Naive thymus-derived CD8-positive, alpha-beta T cell (primary cell): ENCODE measurements at regions of chr21 and their contacts with region 1.

Region 1: DNA sequence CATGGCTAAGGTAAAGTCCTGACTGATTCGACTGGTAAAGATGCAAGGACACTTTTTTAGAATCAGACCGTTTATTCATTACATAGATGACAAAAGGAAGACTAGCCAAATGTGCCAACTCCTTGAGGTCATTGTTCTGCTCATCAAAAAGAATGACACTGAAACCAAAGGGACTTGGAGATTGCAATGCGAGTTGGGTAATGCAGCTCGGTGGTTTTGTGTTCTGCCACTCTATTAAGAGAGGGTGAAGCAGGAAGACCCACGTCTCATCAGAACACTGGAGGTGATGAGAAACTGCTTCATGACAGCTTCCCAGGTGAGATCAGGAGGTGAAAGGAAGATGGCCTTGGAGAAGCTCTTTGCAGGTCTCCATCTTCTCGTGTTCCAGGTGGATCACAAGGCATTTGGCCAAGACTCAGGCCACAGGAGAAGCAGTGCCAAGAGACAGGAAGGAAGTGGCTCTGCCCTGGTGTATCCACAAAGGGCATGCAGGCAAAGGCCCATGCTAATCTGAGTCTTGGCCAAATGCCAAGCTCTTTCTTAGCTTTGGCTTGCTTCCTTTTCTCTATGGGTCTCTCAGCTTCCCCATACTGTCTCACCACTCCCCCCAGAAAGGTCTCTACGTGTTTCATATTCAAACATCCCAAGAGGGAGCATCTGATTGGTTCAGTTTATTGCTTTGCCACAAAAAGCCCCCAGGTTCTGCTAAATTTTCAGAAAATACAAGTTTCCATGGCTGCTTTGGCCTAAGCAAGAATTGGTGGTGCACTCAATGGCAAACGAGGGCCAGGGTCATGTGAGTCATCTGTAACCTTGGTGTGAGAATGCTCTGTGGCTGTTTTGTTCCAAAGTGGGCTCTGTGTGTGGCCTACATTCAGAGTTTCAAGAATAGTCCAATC is 5.7 kb upstream of the CCT8 start:
- DNase-seq: peak in 7 of 10 donors; percentile 35 to 67 (median 46)
- ATAC-seq: peak; percentile 22 to 47
- H3K4me3 Mint-ChIP-seq: peak overlapping the region; percentile 29 to 92 (median 68)
- H3K27ac Mint-ChIP-seq: peak overlapping the region; percentile 78 to 96 (median 94)
- H3K4me1 Mint-ChIP-seq: peaks cover 27 to 74% (median 70%) of the 10 kb centered on the region in 4 donors
- H3K27me3 Mint-ChIP-seq: no peaks in the 10 kb centered on the region

Region 2: DNA sequence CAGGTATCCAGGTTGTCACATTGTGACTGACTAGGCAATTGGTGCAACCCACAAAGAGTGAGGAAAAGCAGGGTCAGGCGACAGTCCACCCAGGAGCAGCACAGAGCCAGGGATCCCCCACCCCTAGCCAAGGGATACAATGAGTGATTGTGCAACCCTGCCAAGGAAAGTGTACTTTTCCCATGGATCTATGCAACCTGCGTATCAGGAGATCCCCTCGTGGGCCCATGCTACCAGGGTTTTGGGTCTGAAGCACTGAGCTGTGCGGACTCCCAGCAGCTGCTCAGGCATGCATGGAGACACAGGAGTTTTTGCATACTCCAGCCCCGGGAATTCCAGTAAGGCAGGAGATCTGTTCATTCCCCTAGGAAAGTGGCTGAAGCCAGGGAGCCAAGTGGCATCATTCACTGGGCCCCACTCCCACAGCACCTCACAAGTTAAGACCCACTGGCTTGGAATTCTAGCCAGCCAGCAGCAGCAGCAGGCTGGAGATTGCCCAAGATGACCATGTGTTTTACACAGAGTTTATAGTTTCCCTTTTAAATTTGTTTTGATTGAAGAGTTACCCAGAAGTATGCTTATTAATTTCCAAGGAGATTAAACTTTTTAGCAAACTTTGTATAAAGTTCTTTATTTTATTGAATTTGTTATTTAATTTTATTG is 222.4 kb before region 1 on chr21:
- POLR2A ChIA-PET with region 1: no interaction called
- DNase-seq: no peak
- ATAC-seq: no peak
- H3K4me3 Mint-ChIP-seq: no peak overlapping the region
- H3K27ac Mint-ChIP-seq: no peak overlapping the region
- H3K4me1 Mint-ChIP-seq: peaks cover 0 to 11% (median 6%) of the 10 kb centered on the region in 4 donors
- H3K27me3 Mint-ChIP-seq: no peaks in the 10 kb centered on the region

Region 3: DNA sequence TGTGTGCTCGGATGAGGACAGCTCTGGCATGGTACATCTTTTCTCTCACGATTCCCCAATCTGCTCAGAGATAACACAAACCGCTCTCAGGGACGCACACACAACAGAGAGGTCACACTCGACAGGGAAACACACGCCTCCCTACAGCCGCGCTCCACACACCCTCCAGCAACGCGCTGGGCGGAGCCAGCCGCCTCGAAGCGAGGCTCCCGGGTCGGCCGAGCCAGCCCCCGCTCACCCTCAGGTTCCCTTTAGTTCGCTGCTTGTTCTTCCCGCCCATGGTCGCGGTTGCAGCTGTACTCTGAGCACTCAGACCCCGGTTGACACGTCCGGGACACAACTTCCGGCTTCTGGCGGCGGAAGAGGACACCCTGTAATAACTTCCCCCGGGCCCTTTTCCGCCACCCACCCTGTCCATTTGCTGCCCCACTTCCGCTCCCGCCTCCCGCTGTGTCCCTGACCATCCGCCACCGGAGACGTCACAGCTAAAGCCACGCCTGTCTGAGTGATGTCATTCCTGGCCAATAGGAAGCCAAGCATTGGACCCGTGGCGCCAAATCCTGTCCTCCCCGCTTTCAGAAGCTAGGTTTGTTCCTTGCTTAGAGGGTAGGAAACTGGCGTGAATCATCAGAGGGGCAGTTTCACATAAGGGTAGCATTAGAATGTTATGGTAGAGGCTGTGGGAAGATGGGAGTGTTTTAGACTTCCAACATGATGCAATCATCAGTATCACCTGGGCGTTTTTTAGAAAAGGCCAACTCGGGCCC is 86.4 kb before region 1 on chr21 and contains the start of gene LTN1:
- POLR2A ChIA-PET with region 1: interaction called, 14 read pairs
- DNase-seq: peak; percentile 92 to 99 (median 98)
- ATAC-seq: peak; percentile 91 to 92
- H3K4me3 Mint-ChIP-seq: peak within 1 kb of the TSS; percentile 92 to 99 (median 98)
- H3K27ac Mint-ChIP-seq: peak within 1 kb of the TSS; percentile 94 to 99 (median 98)
- H3K4me1 Mint-ChIP-seq: peaks cover 14 to 46% (median 38%) of the 10 kb centered on the region in 4 donors
- H3K27me3 Mint-ChIP-seq: no peaks in the 10 kb centered on the region
- polyA plus RNA-seq, gene LTN1: 12.0 to 14.1 (median 13.0) TPM

Region 4: GRCh38 chr21:29002442-29003144 is 76.5 kb before region 1 on chr21:
- POLR2A ChIA-PET with region 1: interaction called, 31 read pairs
- DNase-seq: peak; percentile 87 to 98 (median 94)
- ATAC-seq: peak; percentile 99 to 100
- H3K4me3 Mint-ChIP-seq: peak overlapping the region; percentile 84 to 96 (median 93)
- H3K27ac Mint-ChIP-seq: peak overlapping the region; percentile 97 to 99 (median 98)
- H3K4me1 Mint-ChIP-seq: peaks cover 1 to 24% (median 12%) of the 10 kb centered on the region in 4 donors
- H3K27me3 Mint-ChIP-seq: no peaks in the 10 kb centered on the region

Region 5: GRCh38 chr21:29034678-29035077 is 44.4 kb before region 1 on chr21:
- POLR2A ChIA-PET with region 1: no interaction called
- DNase-seq: no peak
- ATAC-seq: no peak
- H3K4me3 Mint-ChIP-seq: no peak overlapping the region
- H3K27ac Mint-ChIP-seq: peak overlapping the region in 1 of 10 donors; percentile 28
- H3K4me1 Mint-ChIP-seq: peaks cover 7 to 31% (median 15%) of the 10 kb centered on the region in 4 donors
- H3K27me3 Mint-ChIP-seq: no peaks in the 10 kb centered on the region

Region 6: GRCh38 chr21:29130270-29130969 is 51.3 kb after region 1 on chr21 and contains the start of gene MAP3K7CL:
- POLR2A ChIA-PET with region 1: no interaction called
- DNase-seq: no peak
- ATAC-seq: no peak
- H3K4me3 Mint-ChIP-seq: no peak within 1 kb of the TSS
- H3K27ac Mint-ChIP-seq: no peak within 1 kb of the TSS
- H3K4me1 Mint-ChIP-seq: no peaks in the 10 kb centered on the region
- H3K27me3 Mint-ChIP-seq: no peaks in the 10 kb centered on the region
- polyA plus RNA-seq, gene MAP3K7CL: 2.6 to 6.5 (median 5.4) TPM